Naive thymus-derived CD4-positive, alpha-beta T cell (primary cell): ENCODE measurements at regions of chr20 and their contacts with region 1.

Region 1: DNA sequence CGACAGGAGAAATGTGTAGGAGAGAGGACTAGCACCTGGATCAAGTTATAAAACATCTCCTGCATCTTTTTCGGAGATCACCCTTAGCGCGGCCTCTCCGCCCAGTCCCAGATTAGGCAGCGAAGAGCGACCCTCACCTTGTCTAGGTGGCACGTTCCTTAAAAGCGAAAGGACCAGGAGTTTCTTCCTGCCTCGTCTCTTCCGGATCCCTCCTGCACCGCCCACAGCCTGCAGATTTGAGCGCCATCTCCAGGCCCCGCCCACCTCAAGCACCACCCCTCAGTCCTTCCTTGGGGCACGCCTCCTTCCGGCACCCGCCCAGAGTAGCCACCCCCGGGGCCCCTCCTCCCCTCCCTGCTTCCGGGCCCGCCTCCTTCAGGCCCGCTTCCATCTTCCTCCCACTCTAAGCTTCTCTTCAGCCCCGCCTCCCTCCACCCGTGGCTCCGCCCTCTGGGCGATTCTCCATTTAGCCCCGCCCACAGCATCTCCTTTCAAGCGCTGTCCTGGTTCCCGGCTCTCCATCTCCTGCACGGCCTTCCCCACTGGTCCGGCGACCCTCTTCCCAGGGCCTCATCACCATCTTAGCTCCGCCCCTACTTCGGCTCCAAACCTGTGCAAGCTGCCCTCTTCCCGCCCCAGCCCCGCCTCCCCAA is 662 bp upstream of the RALY start:
- DNase-seq: peak; percentile 97 to 100 (median 100)
- ATAC-seq: peak; percentile 91
- H3K4me3 ChIP-seq: peak overlapping the region; percentile 96
- H3K4me3 Mint-ChIP-seq: peak overlapping the region; percentile 87 to 99 (median 96)
- H3K27ac ChIP-seq: peak overlapping the region; percentile 97
- H3K27ac Mint-ChIP-seq: peak overlapping the region; percentile 91 to 99 (median 96)
- H3K4me1 ChIP-seq: peaks cover 32 to 43% of the 10 kb centered on the region in 2 donors
- H3K4me1 Mint-ChIP-seq: peaks cover 44 to 69% (median 60%) of the 10 kb centered on the region in 7 donors
- H3K27me3 ChIP-seq: no peaks in the 10 kb centered on the region
- H3K27me3 Mint-ChIP-seq: no peaks in the 10 kb centered on the region

Region 2: GRCh38 chr20:33401184-33401920 is 591.7 kb before region 1 on chr20 and contains the start of gene CDK5RAP1:
- CTCF ChIA-PET with region 1: no interaction called
- POLR2A ChIA-PET with region 1: no interaction called
- intact Hi-C with region 1: loop called in 1 of 2 experiments (anchors 1 kb)
- DNase-seq: peak; percentile 62 to 84 (median 82)
- ATAC-seq: peak; percentile 98
- H3K4me3 ChIP-seq: peak within 1 kb of the TSS; percentile 93
- H3K4me3 Mint-ChIP-seq: peak within 1 kb of the TSS; percentile 92 to 99 (median 98)
- H3K27ac ChIP-seq: peak within 1 kb of the TSS; percentile 80
- H3K27ac Mint-ChIP-seq: peak within 1 kb of the TSS; percentile 89 to 94 (median 92)
- H3K4me1 ChIP-seq: peaks cover 23 to 33% of the 10 kb centered on the region in 2 donors
- H3K4me1 Mint-ChIP-seq: peaks cover 36 to 71% (median 64%) of the 10 kb centered on the region in 7 donors
- H3K27me3 ChIP-seq: no peaks in the 10 kb centered on the region
- H3K27me3 Mint-ChIP-seq: no peaks in the 10 kb centered on the region
- total RNA-seq, gene CDK5RAP1: 33.6 to 51.8 (median 49.4) TPM

Region 3: DNA sequence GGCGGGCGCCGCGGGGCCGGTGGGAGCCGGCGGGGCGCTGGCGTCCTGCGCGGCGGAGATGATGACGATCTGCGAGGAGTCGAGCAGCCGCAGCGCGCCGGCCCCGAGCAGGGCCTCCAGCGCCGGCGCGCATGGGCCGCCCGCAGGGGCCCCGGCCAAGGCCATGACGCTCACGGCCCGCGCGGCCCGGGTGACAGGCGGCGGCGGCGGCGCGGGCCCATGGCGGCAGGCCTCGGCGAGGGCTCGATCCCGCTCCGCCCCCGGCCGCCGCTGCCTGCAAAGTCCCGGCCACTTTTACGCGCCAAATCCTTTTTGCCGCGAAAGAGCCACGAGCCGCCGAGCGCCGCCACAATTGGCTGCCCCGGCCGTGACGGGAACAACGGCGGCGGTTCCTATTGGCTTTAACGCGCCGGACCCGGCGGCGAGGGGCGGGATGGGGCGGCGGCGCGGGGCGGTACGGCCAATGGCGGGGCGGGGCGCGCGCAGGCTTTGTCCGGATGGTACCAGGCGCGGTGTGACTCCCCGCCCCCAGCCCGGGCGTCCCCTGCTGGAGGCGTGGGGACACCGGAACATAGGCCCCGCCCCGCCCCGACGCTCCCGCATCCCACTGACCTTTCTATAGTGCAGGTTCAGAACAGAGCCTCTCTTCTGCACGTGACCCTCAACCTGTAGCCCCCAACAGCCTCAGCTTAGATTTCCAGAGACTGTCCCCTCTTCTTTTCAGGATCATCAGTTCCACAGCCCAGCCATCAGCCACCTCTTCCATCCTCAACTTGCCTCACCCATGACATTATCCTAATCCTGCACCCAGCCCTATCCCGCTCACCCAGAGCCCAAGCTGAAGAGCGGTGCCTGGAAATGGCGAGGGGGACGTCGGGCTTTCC is 306.7 kb before region 1 on chr20 and contains the start of gene E2F1:
- CTCF ChIA-PET with region 1: no interaction called
- POLR2A ChIA-PET with region 1: no interaction called
- intact Hi-C with region 1: loop called in 1 of 2 experiments (anchors 1 kb)
- DNase-seq: peak; percentile 85 to 98 (median 90)
- ATAC-seq: peak; percentile 98
- H3K4me3 ChIP-seq: peak within 1 kb of the TSS; percentile 55
- H3K4me3 Mint-ChIP-seq: peak within 1 kb of the TSS; percentile 74 to 95 (median 84)
- H3K27ac ChIP-seq: peak within 1 kb of the TSS; percentile 59
- H3K27ac Mint-ChIP-seq: peak within 1 kb of the TSS; percentile 6 to 95 (median 84)
- H3K4me1 ChIP-seq: peaks cover 3 to 27% of the 10 kb centered on the region in 2 donors
- H3K4me1 Mint-ChIP-seq: peaks cover 11 to 72% (median 38%) of the 10 kb centered on the region in 7 donors
- H3K27me3 ChIP-seq: no peaks in the 10 kb centered on the region
- H3K27me3 Mint-ChIP-seq: no peaks in the 10 kb centered on the region
- total RNA-seq, gene E2F1: 0.98 to 61.6 (median 1.6) TPM

Region 4: DNA sequence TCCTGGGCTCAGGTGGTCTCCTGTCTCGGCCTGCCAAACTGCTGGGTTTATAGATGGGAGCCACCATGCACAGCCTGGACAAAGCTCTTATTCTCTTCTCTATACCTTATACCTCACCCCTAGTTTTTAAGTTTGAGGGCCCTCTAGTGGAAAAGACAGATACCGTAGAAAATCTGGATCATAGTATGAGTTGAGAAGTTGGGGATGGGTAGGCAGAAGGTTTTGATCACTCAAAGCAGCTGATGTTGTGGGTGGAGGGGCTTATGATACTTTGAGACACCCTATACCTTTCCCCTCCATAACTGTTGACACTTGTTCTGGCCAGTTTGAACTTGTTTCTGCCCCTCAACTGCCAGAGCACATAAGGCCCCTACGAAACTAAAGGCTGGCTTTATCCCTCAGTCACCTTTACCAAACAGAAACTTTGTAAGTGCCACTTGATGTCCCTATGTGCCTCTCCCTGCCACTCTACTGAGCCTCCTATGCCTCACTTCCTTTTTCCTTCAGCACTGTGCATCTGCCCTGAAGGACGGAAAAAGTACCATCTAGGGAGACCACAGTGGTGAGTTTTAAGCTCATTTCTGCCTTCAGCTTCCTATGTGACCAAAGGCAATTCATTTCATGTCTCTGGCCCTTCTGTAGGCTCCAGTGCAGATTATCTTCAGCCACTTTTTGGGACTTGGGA is 29.2 kb after region 1 on chr20:
- CTCF ChIA-PET with region 1: no interaction called
- POLR2A ChIA-PET with region 1: no interaction called
- intact Hi-C with region 1: loop called in 1 of 2 experiments (anchors 2 kb)
- DNase-seq: peak in 7 of 9 donors; percentile 2 to 32 (median 18)
- ATAC-seq: peak; percentile 69
- H3K4me3 ChIP-seq: no peak overlapping the region
- H3K4me3 Mint-ChIP-seq: peak overlapping the region in 4 of 10 donors; percentile 3 to 19 (median 12)
- H3K27ac ChIP-seq: no peak overlapping the region
- H3K27ac Mint-ChIP-seq: peak overlapping the region; percentile 21 to 76 (median 68)
- H3K4me1 ChIP-seq: peaks cover 29 to 50% of the 10 kb centered on the region in 2 donors
- H3K4me1 Mint-ChIP-seq: peaks cover 59 to 93% (median 88%) of the 10 kb centered on the region in 7 donors
- H3K27me3 ChIP-seq: no peaks in the 10 kb centered on the region
- H3K27me3 Mint-ChIP-seq: no peaks in the 10 kb centered on the region

Region 5: DNA sequence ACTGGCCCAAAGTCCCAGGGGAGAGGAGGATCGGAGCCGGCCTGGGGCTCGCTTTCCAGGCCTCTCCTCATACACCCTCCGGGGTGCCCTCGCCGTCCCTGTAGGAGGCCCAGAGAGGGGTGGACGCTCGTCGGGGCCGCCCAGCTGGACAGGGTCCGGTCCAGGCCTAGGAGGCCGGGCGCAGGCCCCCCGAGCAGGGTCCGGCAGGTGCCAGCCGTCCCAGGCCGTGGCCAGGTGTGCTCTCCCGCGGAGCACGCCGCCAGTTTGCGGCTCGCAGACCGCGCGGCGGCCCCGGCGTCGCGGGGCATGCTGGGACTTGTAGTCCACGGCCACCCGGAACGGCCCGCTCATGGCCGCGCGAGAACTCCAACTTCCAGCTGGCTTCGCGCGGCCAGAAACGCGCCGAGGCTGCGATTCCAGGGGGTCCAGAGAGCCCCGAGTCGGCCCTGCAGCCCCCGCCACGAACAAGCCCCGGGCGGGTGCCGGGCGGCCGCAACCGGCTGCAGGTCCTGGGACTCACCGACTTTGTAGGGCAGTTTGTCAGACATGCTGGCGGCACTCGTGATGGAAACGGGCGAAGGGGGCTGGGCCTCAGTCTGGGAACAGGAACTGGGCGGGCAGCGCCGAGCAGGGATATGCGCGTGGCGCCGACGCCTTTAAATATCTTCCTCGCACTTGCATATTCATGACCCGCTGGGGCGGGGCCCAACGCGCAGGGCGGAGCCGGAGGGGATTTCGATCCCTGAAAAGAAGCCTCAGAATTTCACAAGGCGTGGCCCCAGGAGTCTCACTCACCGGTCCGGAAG is 309.9 kb after region 1 on chr20 and contains the start of gene AHCY:
- CTCF ChIA-PET with region 1: no interaction called
- POLR2A ChIA-PET with region 1: interaction called, 4 read pairs
- intact Hi-C with region 1: loop called in 1 of 2 experiments (anchors 2 kb)
- DNase-seq: peak; percentile 84 to 95 (median 92)
- ATAC-seq: peak; percentile 96
- H3K4me3 ChIP-seq: peak within 1 kb of the TSS; percentile 91
- H3K4me3 Mint-ChIP-seq: peak within 1 kb of the TSS; percentile 90 to 96 (median 91)
- H3K27ac ChIP-seq: peak within 1 kb of the TSS; percentile 87
- H3K27ac Mint-ChIP-seq: peak within 1 kb of the TSS; percentile 89 to 95 (median 93)
- H3K4me1 ChIP-seq: peaks cover 3 to 6% of the 10 kb centered on the region in 2 donors
- H3K4me1 Mint-ChIP-seq: peaks cover 0 to 27% (median 14%) of the 10 kb centered on the region in 7 donors
- H3K27me3 ChIP-seq: no peaks in the 10 kb centered on the region
- H3K27me3 Mint-ChIP-seq: peaks cover 0 to 2% (median 0%) of the 10 kb centered on the region in 5 donors
- total RNA-seq, gene AHCY: 19.1 to 62.9 (median 23.7) TPM

Region 6: DNA sequence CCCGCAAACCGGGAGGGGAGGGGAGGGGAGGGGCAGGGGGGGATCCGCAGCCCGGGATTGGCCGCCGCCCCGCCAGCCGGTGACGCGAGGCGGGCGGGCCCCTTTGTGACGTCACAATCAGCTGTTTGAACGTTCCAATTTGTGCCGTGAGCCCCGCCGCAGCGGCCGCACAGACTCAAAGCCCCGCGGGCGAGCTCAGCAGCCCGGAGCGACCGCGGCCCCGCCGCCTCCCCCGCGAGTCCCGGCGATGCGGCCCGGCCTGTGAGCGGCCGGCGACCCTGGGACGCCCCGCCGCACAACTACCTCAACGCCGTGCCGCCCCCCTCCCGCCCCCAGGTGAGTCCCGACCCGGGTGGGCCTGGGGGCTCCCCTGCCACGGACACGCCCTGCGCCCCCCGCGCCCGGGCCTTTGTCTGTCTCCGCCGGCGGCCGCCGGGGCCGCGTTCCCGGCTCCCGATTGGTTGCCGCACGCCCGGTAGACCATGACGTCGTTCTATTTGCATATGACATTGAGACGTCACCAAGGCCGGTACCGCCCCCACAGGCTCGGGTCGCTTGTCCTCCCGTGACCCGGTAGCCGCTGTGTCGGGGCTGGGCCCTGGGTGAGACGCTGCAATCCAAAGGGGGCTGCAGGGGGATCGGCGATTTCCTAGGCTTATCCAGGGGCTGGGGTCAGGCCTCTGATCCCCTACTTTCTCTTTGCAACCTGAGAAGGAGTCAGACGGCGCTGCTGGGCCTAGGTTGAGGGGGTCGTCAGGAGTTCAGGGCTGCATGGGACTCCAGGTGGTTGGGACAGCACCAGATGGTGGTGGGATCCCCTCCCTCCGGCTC is 711.3 kb after region 1 on chr20 and contains the start of gene TP53INP2:
- CTCF ChIA-PET with region 1: no interaction called
- POLR2A ChIA-PET with region 1: no interaction called
- intact Hi-C with region 1: loop called in 1 of 2 experiments (anchors 10 kb)
- DNase-seq: peak; percentile 82 to 93 (median 87)
- ATAC-seq: peak; percentile 78
- H3K4me3 ChIP-seq: peak within 1 kb of the TSS; percentile 59
- H3K4me3 Mint-ChIP-seq: peak within 1 kb of the TSS; percentile 91 to 98 (median 94)
- H3K27ac ChIP-seq: peak within 1 kb of the TSS; percentile 94
- H3K27ac Mint-ChIP-seq: peak within 1 kb of the TSS; percentile 79 to 100 (median 97)
- H3K4me1 ChIP-seq: peaks cover 6 to 7% of the 10 kb centered on the region in 2 donors
- H3K4me1 Mint-ChIP-seq: peaks cover 15 to 39% (median 25%) of the 10 kb centered on the region in 7 donors
- H3K27me3 ChIP-seq: no peaks in the 10 kb centered on the region
- H3K27me3 Mint-ChIP-seq: peaks cover 0 to 25% (median 6%) of the 10 kb centered on the region in 5 donors
- total RNA-seq, gene TP53INP2: 1.2 to 41.4 (median 1.5) TPM